Endothelial cell of umbilical vein (primary cell): ENCODE measurements at regions of chr1 and their contacts with region 1.

Region 1: DNA sequence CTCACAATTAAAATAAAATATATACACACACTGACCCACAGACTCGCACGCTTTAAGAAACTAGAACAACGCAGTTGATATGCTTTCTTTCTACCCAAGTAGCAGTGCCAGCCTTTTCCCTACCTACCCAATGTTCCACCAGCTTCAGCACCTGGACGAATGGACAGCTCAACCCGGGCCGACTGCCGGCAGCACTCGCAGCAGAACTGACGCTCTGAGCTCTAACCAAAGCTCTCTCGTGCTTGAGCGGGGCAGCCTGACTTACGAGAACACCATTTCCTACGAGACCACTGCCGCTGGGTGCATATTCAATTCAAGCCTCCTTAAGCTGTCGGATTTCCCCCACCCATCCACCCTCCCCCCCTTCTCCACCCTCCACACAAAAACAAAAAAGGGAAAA is 127.4 kb upstream of the DPYD start:
- DNase-seq: peak; percentile 84
- H3K4me3 ChIP-seq: peak overlapping the region; percentile 34 to 62 (median 60)
- H3K27ac ChIP-seq: no peak overlapping the region
- H3K4me1 ChIP-seq: peaks cover 32% of the 10 kb centered on the region
- H3K27me3 ChIP-seq: no peaks in the 10 kb centered on the region
- CTCF ChIP-seq: peak in 1 of 2 donors; percentile 6
- POLR2A ChIP-seq: no peak

Region 2: DNA sequence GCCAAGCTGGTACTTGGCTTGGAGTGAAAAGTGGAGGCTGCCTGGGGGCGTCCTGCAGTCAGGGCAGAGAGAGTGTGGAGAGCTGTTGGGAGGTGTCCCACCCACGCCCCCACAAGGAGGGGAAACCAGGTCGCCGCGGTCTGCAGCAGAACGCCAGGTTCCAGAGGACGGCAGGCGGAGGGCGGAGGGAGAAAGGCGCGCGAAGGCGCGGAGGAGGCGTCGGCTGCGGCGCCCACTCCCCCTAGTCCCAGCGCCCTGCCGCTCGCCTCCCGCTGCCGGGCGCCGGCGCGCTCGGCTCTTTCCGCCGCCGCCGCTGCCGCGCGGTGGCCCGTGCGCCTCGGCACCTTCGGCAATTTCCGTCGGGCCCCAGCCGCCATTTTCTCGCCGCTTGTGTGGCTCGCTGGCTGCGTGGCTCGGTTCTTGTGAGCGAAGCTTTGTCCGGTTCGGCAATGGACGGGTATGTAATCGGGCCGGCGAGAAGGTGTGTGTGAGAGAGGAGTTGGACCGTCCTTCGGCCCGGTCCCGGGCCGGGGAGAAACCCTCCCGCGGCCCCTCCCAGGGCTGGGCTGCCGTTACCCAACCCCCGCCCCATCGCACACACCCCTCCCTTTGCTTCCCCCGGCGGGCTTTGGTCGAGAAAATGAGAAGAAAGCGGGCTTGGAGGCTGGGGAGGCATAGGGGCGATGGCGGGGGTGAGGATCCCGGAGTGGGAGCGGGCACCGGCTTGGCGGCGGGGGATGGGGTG is 1326.7 kb before region 1 on chr1 and contains the start of gene PTBP2:
- CTCF ChIA-PET with region 1: no interaction called
- POLR2A ChIA-PET with region 1: no interaction called
- dilution Hi-C with region 1: no loop called
- intact Hi-C with region 1: loop called (anchors 5 kb)
- DNase-seq: peak; percentile 84
- H3K4me3 ChIP-seq: peak within 1 kb of the TSS; percentile 52 to 99 (median 93)
- H3K27ac ChIP-seq: peak within 1 kb of the TSS; percentile 82
- H3K4me1 ChIP-seq: peaks cover 23% of the 10 kb centered on the region
- H3K27me3 ChIP-seq: no peaks in the 10 kb centered on the region
- CTCF ChIP-seq: no peak
- POLR2A ChIP-seq: no peak
- total RNA-seq, gene PTBP2: 21.3 and 27.0 TPM in 2 replicates

Region 3: DNA sequence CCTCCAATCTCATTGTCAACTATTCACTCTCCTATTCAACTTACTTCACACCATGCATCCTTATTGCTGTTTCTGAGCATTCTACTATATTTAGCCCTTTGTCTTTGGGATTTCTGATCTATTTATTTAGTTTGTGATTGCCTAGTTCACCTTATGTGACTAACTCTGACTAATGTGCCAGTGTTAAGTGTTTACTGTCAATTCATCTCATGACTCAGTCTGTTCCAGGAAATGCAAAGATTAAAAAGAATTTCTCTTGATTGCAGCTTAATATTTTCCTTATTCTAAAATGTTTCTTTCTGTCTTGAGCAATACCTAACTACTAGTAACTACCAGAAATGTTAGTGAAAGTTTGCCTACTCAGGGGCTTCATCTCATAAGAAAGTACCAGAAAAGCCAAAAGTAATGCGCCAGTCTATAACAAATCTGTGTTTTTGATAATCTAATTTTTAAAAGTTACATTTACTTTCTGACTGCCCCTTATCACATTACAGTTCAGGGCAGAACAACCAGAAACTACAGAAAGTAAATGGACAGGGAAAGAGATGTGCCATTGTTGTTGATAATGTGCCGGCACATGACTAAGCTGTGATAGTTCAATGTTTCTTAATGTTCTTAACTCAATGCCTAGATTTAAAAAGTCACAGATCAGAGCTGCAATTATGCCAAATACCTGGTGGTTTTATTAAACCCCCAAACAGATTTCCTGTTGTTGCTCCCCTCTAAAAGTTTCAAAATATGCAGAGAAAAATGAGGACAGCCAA is 770.2 kb before region 1 on chr1:
- CTCF ChIA-PET with region 1: no interaction called
- POLR2A ChIA-PET with region 1: no interaction called
- dilution Hi-C with region 1: no loop called
- intact Hi-C with region 1: loop called (anchors 10 kb)
- DNase-seq: peak; percentile 79
- H3K4me3 ChIP-seq: peak overlapping the region in 1 of 3 experiments; percentile 17
- H3K27ac ChIP-seq: peak overlapping the region; percentile 83
- H3K4me1 ChIP-seq: peaks cover 25% of the 10 kb centered on the region
- H3K27me3 ChIP-seq: no peaks in the 10 kb centered on the region
- CTCF ChIP-seq: no peak
- POLR2A ChIP-seq: no peak

Region 4: GRCh38 chr1:97796711-97797110 is 251.5 kb before region 1 on chr1:
- CTCF ChIA-PET with region 1: no interaction called
- POLR2A ChIA-PET with region 1: no interaction called
- dilution Hi-C with region 1: no loop called
- intact Hi-C with region 1: loop called (anchors 1 kb)
- DNase-seq: peak; percentile 89
- H3K4me3 ChIP-seq: no peak overlapping the region
- H3K27ac ChIP-seq: peak overlapping the region; percentile 84
- H3K4me1 ChIP-seq: peaks cover 29% of the 10 kb centered on the region
- H3K27me3 ChIP-seq: no peaks in the 10 kb centered on the region
- CTCF ChIP-seq: no peak
- POLR2A ChIP-seq: no peak

Region 5: GRCh38 chr1:97906567-97907241 is 141.5 kb before region 1 on chr1:
- CTCF ChIA-PET with region 1: interaction called, 3 read pairs
- POLR2A ChIA-PET with region 1: no interaction called
- dilution Hi-C with region 1: no loop called
- intact Hi-C with region 1: loop called (anchors 1 kb)
- DNase-seq: peak; percentile 88
- H3K4me3 ChIP-seq: no peak overlapping the region
- H3K27ac ChIP-seq: peak overlapping the region; percentile 68
- H3K4me1 ChIP-seq: peaks cover 43% of the 10 kb centered on the region
- H3K27me3 ChIP-seq: no peaks in the 10 kb centered on the region
- CTCF ChIP-seq: no peak
- POLR2A ChIP-seq: no peak

Region 6: GRCh38 chr1:98001764-98002163 is 46.5 kb before region 1 on chr1:
- CTCF ChIA-PET with region 1: interaction called, 16 read pairs
- POLR2A ChIA-PET with region 1: no interaction called
- dilution Hi-C with region 1: no loop called
- intact Hi-C with region 1: loop called (anchors 1 kb)
- DNase-seq: no peak
- H3K4me3 ChIP-seq: no peak overlapping the region
- H3K27ac ChIP-seq: no peak overlapping the region
- H3K4me1 ChIP-seq: peaks cover 24% of the 10 kb centered on the region
- H3K27me3 ChIP-seq: no peaks in the 10 kb centered on the region
- CTCF ChIP-seq: no peak
- POLR2A ChIP-seq: no peak

Region 7: GRCh38 chr1:98068016-98068415 is 19.8 kb after region 1 on chr1:
- CTCF ChIA-PET with region 1: no interaction called
- POLR2A ChIA-PET with region 1: no interaction called
- dilution Hi-C with region 1: no loop called
- intact Hi-C with region 1: no loop called
- DNase-seq: no peak
- H3K4me3 ChIP-seq: no peak overlapping the region
- H3K27ac ChIP-seq: no peak overlapping the region
- H3K4me1 ChIP-seq: peaks cover 5% of the 10 kb centered on the region
- H3K27me3 ChIP-seq: no peaks in the 10 kb centered on the region
- CTCF ChIP-seq: no peak
- POLR2A ChIP-seq: no peak

Region 8: DNA sequence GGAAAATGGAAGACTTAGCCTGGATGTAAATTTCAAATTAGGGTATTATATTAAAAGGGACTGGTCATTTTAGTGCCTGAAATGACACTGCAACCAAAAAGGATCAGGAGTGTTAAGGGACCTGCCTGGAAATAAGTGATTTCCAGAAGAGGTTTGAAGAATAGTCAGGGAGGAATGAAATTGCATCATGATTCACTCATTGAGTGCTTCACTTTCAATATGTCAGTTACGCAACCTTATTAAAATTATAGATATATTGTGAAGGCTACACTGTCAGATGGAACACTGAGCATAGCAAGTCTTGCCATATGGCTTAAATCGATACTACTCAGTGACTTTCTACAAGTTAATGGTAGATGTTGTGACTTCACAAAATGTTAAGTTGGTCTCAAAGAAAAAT is 147.8 kb after region 1 on chr1:
- CTCF ChIA-PET with region 1: no interaction called
- POLR2A ChIA-PET with region 1: no interaction called
- dilution Hi-C with region 1: no loop called
- intact Hi-C with region 1: no loop called
- DNase-seq: no peak
- H3K4me3 ChIP-seq: no peak overlapping the region
- H3K27ac ChIP-seq: no peak overlapping the region
- H3K4me1 ChIP-seq: no peaks in the 10 kb centered on the region
- H3K27me3 ChIP-seq: no peaks in the 10 kb centered on the region
- CTCF ChIP-seq: no peak
- POLR2A ChIP-seq: no peak

Region 9: DNA sequence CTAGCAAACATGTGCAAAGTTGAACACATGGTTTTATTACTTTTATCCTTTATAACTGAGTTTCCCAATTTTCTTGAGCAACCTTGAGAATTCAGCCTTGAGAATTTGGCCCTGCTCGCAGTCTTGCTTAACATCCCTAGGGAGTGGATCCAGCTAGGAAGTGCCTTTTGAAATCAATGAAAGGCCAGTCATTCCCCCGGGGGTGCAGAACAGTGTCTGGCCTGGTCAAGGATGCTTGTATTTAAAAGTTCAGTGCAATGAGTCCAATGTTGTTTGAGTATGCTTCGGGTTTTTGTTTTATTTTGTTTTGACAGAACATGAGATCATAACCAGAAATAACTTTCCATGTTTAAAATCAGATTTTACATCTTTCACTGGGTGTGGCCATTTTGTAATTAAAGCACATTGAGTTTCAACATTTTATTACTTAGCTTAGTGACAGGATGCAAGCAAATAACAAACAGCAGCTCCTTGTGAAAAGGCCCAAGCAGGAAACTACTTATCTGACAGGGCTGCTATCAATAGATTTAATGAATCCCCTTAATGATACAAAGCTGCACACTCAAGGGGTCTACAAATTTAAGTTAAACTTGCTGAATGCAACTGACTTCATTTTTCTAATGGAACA is 1614.5 kb after region 1 on chr1:
- CTCF ChIA-PET with region 1: no interaction called
- POLR2A ChIA-PET with region 1: no interaction called
- dilution Hi-C with region 1: no loop called
- intact Hi-C with region 1: no loop called
- DNase-seq: peak; percentile 37
- H3K4me3 ChIP-seq: no peak overlapping the region
- H3K27ac ChIP-seq: peak overlapping the region; percentile 12
- H3K4me1 ChIP-seq: peaks cover 52% of the 10 kb centered on the region
- H3K27me3 ChIP-seq: no peaks in the 10 kb centered on the region
- CTCF ChIP-seq: no peak
- POLR2A ChIP-seq: no peak